ENCODE measurements at regions of chr4 and their contacts with region 1.

Region 1: GRCh38 chr4:7960790-7961655 is 21.4 kb upstream of the AFAP1 start:
- DNase-seq: peak; percentile 97
- ATAC-seq: peak; percentile 72
- H3K4me3 Mint-ChIP-seq: peak overlapping the region; percentile 48
- H3K27ac Mint-ChIP-seq: peak overlapping the region; percentile 96
- H3K4me1 Mint-ChIP-seq: peaks cover 61% of the 10 kb centered on the region
- H3K27me3 Mint-ChIP-seq: peaks cover 19% of the 10 kb centered on the region
- CTCF ChIP-seq: no peak

Region 2: GRCh38 chr4:7857238-7857701 is 103.8 kb before region 1 on chr4:
- CTCF ChIA-PET with region 1: no interaction called
- POLR2A ChIA-PET with region 1: no interaction called
- intact Hi-C with region 1: loop called (anchors 5 kb)
- DNase-seq: no peak
- ATAC-seq: peak; percentile 45
- H3K4me3 Mint-ChIP-seq: peak overlapping the region; percentile 30
- H3K27ac Mint-ChIP-seq: peak overlapping the region; percentile 85
- H3K4me1 Mint-ChIP-seq: peaks cover 60% of the 10 kb centered on the region
- H3K27me3 Mint-ChIP-seq: no peaks in the 10 kb centered on the region
- CTCF ChIP-seq: no peak

Measured in activated CD8-positive, alpha-beta T cell treated with anti-CD3 and anti-CD28 coated beads for 36 hours (primary cell).